CD8-positive, alpha-beta T cell (primary cell): ENCODE measurements at regions of chr3 and their contacts with region 1.

Region 1: DNA sequence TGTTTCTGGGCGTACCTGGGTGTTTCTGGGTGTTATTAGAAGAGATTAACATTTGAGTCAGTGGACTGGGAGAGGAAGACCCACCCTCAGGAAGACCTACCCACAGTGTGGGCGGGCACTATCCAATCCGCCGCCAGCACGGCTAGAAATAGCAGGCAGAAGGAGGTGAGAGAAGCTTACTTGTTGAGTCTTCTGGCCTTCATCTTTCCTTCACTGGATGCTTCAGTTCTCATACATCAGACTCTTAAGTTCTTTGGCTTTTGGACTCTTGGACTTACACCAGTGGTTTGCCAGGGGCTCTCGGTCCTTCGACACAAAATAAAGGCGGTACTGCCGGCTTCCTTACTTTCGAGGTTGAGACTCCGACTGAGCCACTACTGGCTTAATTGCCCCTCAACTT is 654.6 kb upstream of the CADM2 start:
- DNase-seq: no peak
- ATAC-seq: no peak
- H3K4me3 ChIP-seq: no peak overlapping the region
- H3K4me3 Mint-ChIP-seq: no peak overlapping the region
- H3K27ac ChIP-seq: no peak overlapping the region
- H3K27ac Mint-ChIP-seq: no peak overlapping the region
- H3K4me1 ChIP-seq: no peaks in the 10 kb centered on the region
- H3K4me1 Mint-ChIP-seq: no peaks in the 10 kb centered on the region
- H3K27me3 ChIP-seq: no peaks in the 10 kb centered on the region
- H3K27me3 Mint-ChIP-seq: no peaks in the 10 kb centered on the region
- CTCF ChIP-seq: no peak

Region 2: DNA sequence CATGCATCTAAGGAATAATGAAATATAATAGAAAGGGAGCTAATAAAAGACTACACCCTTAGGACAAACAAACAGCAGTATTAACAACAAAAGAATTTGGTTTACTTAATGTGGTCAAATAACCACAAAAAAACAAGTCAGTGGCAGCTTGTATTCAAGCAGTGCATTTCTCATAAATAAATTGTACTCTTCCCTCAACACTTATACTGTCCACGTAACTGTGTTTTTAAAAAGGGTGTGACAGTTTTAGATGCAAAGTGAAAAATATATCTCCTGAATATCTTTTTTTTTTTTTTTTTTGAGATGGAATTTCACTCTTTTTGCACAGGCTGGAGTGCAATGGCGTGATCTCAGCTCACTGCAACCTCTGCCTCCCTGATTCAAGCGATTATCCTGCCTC is 43.6 kb before region 1 on chr3:
- CTCF ChIA-PET with region 1: no interaction called
- POLR2A ChIA-PET with region 1: no interaction called
- intact Hi-C with region 1: loop called in 1 of 2 experiments (anchors 1 kb)
- DNase-seq: no peak
- ATAC-seq: no peak
- H3K4me3 ChIP-seq: no peak overlapping the region
- H3K4me3 Mint-ChIP-seq: no peak overlapping the region
- H3K27ac ChIP-seq: no peak overlapping the region
- H3K27ac Mint-ChIP-seq: no peak overlapping the region
- H3K4me1 ChIP-seq: no peaks in the 10 kb centered on the region
- H3K4me1 Mint-ChIP-seq: no peaks in the 10 kb centered on the region
- H3K27me3 ChIP-seq: no peaks in the 10 kb centered on the region
- H3K27me3 Mint-ChIP-seq: no peaks in the 10 kb centered on the region
- CTCF ChIP-seq: no peak